ENCODE measurements at regions of chr11 and their contacts with region 1.

Region 1: GRCh38 chr11:46055371-46055770 is 65.9 kb downstream of the PHF21A start:
- DNase-seq: peak; percentile 8
- H3K4me3 Mint-ChIP-seq: no peak overlapping the region
- H3K27ac Mint-ChIP-seq: no peak overlapping the region
- H3K4me1 Mint-ChIP-seq: peaks cover 2% of the 10 kb centered on the region
- H3K27me3 Mint-ChIP-seq: no peaks in the 10 kb centered on the region
- CTCF ChIP-seq: no peak

Region 2: DNA sequence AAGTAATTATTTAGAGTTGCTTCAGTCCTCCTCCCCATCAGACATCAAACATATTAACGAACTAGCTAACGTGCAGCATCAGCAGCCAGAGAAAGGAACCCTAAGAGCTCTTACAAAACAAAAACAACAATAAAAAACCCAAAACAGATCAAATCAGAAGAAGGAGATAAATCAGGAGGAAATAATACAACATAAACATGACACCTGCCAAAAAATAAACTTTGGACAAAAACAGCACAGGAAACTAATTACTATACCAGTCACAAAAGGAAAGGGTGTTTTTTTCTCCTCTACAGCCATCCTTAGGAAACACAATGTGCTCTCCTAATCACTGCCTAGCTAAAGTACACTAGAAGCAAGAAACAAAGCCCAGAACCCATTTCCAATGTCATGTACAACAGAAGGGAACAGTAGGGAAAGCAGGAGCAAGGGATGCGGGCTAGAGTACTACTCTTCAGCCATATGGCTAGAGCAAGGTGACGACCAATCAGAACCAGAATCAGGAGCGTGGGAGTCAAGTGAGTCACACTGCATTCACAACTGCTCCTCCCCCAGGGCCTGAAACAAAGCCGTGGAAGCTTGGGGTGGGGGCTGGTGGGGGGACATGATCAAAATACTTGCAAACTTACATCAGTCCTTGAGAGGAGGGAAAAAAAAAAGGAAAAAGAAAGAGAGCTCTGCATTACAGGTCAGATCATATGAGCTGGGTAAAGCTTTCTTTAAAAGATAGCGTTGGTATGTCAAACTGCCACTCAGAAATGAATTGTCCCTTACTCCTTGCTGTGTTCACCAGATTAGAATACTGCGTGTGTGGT is 72.5 kb before region 1 on chr11:
- CTCF ChIA-PET with region 1: no interaction called
- POLR2A ChIA-PET with region 1: no interaction called
- intact Hi-C with region 1: no loop called
- DNase-seq: peak; percentile 83
- H3K4me3 Mint-ChIP-seq: no peak overlapping the region
- H3K27ac Mint-ChIP-seq: no peak overlapping the region
- H3K4me1 Mint-ChIP-seq: peaks cover 16% of the 10 kb centered on the region
- H3K27me3 Mint-ChIP-seq: no peaks in the 10 kb centered on the region
- CTCF ChIP-seq: no peak

Region 3: DNA sequence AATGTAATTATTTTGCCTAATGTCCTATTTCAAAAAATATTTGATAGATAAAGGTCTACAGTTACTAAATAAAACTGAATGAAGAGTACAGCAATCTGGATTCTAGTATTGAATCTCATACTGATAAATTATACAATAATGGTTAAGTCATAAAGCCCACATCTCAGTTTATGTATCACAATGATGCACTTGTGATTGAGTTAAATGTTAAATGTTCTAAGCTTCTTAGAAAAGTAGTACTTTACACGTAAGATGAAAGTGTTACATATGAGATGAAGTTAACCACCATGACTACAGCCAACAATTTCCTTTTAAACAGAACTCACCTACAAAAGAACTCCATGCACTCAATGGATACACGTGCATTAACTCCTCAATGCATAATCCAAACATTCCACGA is 14.2 kb after region 1 on chr11:
- CTCF ChIA-PET with region 1: interaction called, 3 read pairs
- POLR2A ChIA-PET with region 1: interaction called, 10 read pairs
- intact Hi-C with region 1: no loop called
- DNase-seq: no peak
- H3K4me3 Mint-ChIP-seq: no peak overlapping the region
- H3K27ac Mint-ChIP-seq: no peak overlapping the region
- H3K4me1 Mint-ChIP-seq: peaks cover 7% of the 10 kb centered on the region
- H3K27me3 Mint-ChIP-seq: no peaks in the 10 kb centered on the region
- CTCF ChIP-seq: no peak

Region 4: DNA sequence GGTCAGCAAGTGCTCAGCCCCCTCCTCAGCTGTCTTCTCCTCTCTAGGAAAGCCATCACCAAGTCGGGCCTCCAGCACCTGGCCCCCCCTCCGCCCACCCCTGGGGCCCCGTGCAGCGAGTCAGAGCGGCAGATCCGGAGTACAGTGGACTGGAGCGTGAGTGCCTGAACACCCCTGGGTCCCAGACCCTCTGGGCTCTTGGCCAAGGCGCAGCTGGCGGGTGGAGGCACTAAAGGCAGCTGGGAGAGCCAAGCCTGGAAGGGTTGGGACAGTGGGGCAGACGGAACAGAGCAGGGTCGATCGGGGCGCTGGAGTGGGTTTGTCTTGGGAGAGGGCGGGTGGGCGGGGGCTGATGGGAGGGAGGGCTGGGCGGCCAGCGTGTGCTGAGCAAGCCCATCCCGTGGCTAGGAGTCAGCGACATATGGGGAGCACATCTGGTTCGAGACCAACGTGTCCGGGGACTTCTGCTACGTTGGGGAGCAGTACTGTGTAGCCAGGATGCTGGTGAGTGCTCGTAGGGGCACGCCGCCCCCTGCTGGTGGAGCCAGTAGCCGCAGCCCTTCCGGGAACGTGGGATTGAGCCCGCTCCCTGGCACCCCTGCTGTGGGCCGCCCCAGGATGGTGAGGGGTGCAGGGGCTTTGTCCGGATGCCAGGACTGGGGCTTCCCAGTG is 312.0 kb after region 1 on chr11:
- CTCF ChIA-PET with region 1: no interaction called
- POLR2A ChIA-PET with region 1: no interaction called
- intact Hi-C with region 1: no loop called
- DNase-seq: peak; percentile 58
- H3K4me3 Mint-ChIP-seq: no peak overlapping the region
- H3K27ac Mint-ChIP-seq: no peak overlapping the region
- H3K4me1 Mint-ChIP-seq: peaks cover 9% of the 10 kb centered on the region
- H3K27me3 Mint-ChIP-seq: no peaks in the 10 kb centered on the region
- CTCF ChIP-seq: peak; percentile 76